H1 (cell line): ENCODE measurements at regions of chr15 and their contacts with region 1.

Region 1: GRCh38 chr15:88484682-88485331 is 17.3 kb downstream of the MRPS11 start:
- DNase-seq: no peak
- H3K4me3 ChIP-seq: peak overlapping the region in 1 of 4 experiments; percentile 5; a peak in 2 of 8 replicates
- H3K27ac ChIP-seq: no peak overlapping the region
- H3K4me1 ChIP-seq: peaks cover 2 to 14% (median 9%) of the 10 kb centered on the region in 4 experiments
- H3K27me3 ChIP-seq: no peaks in the 10 kb centered on the region; a peak in 2 of 7 replicates
- CTCF ChIP-seq: no peak
- EP300 ChIP-seq: no peak
- POLR2A ChIP-seq: no peak
- RAD21 ChIP-seq: no peak

Region 2: GRCh38 chr15:88220443-88221335 is 264.1 kb before region 1 on chr15:
- CTCF ChIA-PET with region 1: no interaction called
- POLR2A ChIA-PET with region 1: no interaction called
- DNase-seq: no peak
- H3K4me3 ChIP-seq: no peak overlapping the region
- H3K27ac ChIP-seq: no peak overlapping the region
- H3K4me1 ChIP-seq: no peaks in the 10 kb centered on the region
- H3K27me3 ChIP-seq: no peaks in the 10 kb centered on the region
- CTCF ChIP-seq: no peak
- EP300 ChIP-seq: no peak
- POLR2A ChIP-seq: no peak
- RAD21 ChIP-seq: no peak

Region 3: GRCh38 chr15:88331280-88331679 is 153.5 kb before region 1 on chr15:
- CTCF ChIA-PET with region 1: no interaction called
- POLR2A ChIA-PET with region 1: no interaction called
- DNase-seq: peak; percentile 77 to 96
- H3K4me3 ChIP-seq: no peak overlapping the region
- H3K27ac ChIP-seq: no peak overlapping the region
- H3K4me1 ChIP-seq: no peaks in the 10 kb centered on the region
- H3K27me3 ChIP-seq: no peaks in the 10 kb centered on the region
- CTCF ChIP-seq: peak; percentile 83 to 91 (median 91)
- EP300 ChIP-seq: 0 out of 3 replicates have a peak, but pooled peaks of 1 of the 2 experiments have one; percentile 43
- POLR2A ChIP-seq: no peak
- RAD21 ChIP-seq: peak; percentile 91 to 92

Region 4: GRCh38 chr15:88467073-88467934 is 17.5 kb before region 1 on chr15 and contains the starts of genes MRPL46 and MRPS11:
- CTCF ChIA-PET with region 1: interaction called, 14 read pairs
- POLR2A ChIA-PET with region 1: interaction called, 25 read pairs
- DNase-seq: peak in 1 of 2 experiments; percentile 95
- H3K4me3 ChIP-seq: peak within 1 kb of the TSS; percentile 69 to 98 (median 88)
- H3K27ac ChIP-seq: peak within 1 kb of the TSS; percentile 95
- H3K4me1 ChIP-seq: no peaks in the 10 kb centered on the region; a peak in 1 of 7 replicates
- H3K27me3 ChIP-seq: no peaks in the 10 kb centered on the region
- CTCF ChIP-seq: no peak
- EP300 ChIP-seq: peak in 1 of 2 experiments; percentile 100; a peak in 2 of 3 replicates
- POLR2A ChIP-seq: peak; percentile 87 to 96
- RAD21 ChIP-seq: no peak
- total RNA-seq, gene MRPL46: 24.4 and 24.5 TPM in 2 replicates
- total RNA-seq, gene MRPS11: 41.4 and 50.4 TPM in 2 replicates